K562 (cell line): ENCODE measurements at regions of chr11 and their contacts with region 1.

Region 1: GRCh38 chr11:9015677-9016076 is 11.9 kb upstream of the NRIP3 start:
- DNase-seq: peak; percentile 67 to 76 (median 70)
- ATAC-seq: peak; percentile 96
- H3K4me3 ChIP-seq: no peak overlapping the region
- H3K27ac ChIP-seq: no peak overlapping the region
- H3K4me1 ChIP-seq: no peaks in the 10 kb centered on the region; a peak in 2 of 5 replicates
- H3K27me3 ChIP-seq: peaks cover 0 to 27% of the 10 kb centered on the region in 2 experiments; a peak in 2 of 5 replicates
- CTCF ChIP-seq: peak; percentile 76 to 84 (median 80)
- EP300 ChIP-seq: no peak
- POLR2A ChIP-seq: no peak
- RAD21 ChIP-seq: peak; percentile 45 to 76

Region 2: GRCh38 chr11:8989453-8989852 is 26.2 kb before region 1 on chr11:
- CTCF ChIA-PET with region 1: no interaction called
- POLR2A ChIA-PET with region 1: no interaction called
- in situ Hi-C with region 1: no loop called
- intact Hi-C with region 1: no loop called
- DNase-seq: peak in 3 of 4 experiments; percentile 20 to 37 (median 30)
- ATAC-seq: peak; percentile 30; the same call in 1 of the 3 replicates
- H3K4me3 ChIP-seq: no peak overlapping the region
- H3K27ac ChIP-seq: peak overlapping the region; percentile 55; the same call in 2 of the 3 replicates
- H3K4me1 ChIP-seq: peaks cover 6 to 37% of the 10 kb centered on the region in 2 experiments
- H3K27me3 ChIP-seq: no peaks in the 10 kb centered on the region
- CTCF ChIP-seq: no peak
- EP300 ChIP-seq: no peak
- POLR2A ChIP-seq: no peak
- RAD21 ChIP-seq: no peak

Region 3: GRCh38 chr11:9003573-9004309 is 11.9 kb before region 1 on chr11 and contains the start of gene NRIP3:
- CTCF ChIA-PET with region 1: no interaction called
- POLR2A ChIA-PET with region 1: interaction called, 17 read pairs
- in situ Hi-C with region 1: no loop called
- intact Hi-C with region 1: no loop called
- DNase-seq: peak; percentile 83 to 91 (median 90)
- ATAC-seq: peak; percentile 92
- H3K4me3 ChIP-seq: peak within 1 kb of the TSS; percentile 48
- H3K27ac ChIP-seq: peak within 1 kb of the TSS; percentile 63
- H3K4me1 ChIP-seq: peaks cover 15 to 23% of the 10 kb centered on the region in 2 experiments
- H3K27me3 ChIP-seq: no peaks in the 10 kb centered on the region; a peak in 2 of 5 replicates
- CTCF ChIP-seq: 0 out of 6 replicates have a peak, but pooled peaks of 1 of the 3 experiments have one; percentile 9
- EP300 ChIP-seq: no peak
- POLR2A ChIP-seq: peak; percentile 80
- RAD21 ChIP-seq: 0 out of 4 replicates have a peak, but pooled peaks of 1 of the 2 experiments have one; percentile 3
- polyA plus RNA-seq, gene NRIP3: 4.4 to 6.4 TPM

Region 4: GRCh38 chr11:9060700-9061111 is 45.0 kb after region 1 on chr11:
- CTCF ChIA-PET with region 1: no interaction called
- POLR2A ChIA-PET with region 1: no interaction called
- in situ Hi-C with region 1: no loop called
- intact Hi-C with region 1: loop called (anchors 5 kb)
- DNase-seq: peak; percentile 38 to 59 (median 50)
- ATAC-seq: peak; percentile 85
- H3K4me3 ChIP-seq: no peak overlapping the region
- H3K27ac ChIP-seq: no peak overlapping the region
- H3K4me1 ChIP-seq: no peaks in the 10 kb centered on the region; a peak in 2 of 5 replicates
- H3K27me3 ChIP-seq: peaks cover 8 to 24% of the 10 kb centered on the region in 2 experiments
- CTCF ChIP-seq: peak; percentile 46 to 60 (median 56)
- EP300 ChIP-seq: no peak
- POLR2A ChIP-seq: no peak
- RAD21 ChIP-seq: peak in 1 of 2 experiments; percentile 44; a peak in 2 of 4 replicates

Region 5: DNA sequence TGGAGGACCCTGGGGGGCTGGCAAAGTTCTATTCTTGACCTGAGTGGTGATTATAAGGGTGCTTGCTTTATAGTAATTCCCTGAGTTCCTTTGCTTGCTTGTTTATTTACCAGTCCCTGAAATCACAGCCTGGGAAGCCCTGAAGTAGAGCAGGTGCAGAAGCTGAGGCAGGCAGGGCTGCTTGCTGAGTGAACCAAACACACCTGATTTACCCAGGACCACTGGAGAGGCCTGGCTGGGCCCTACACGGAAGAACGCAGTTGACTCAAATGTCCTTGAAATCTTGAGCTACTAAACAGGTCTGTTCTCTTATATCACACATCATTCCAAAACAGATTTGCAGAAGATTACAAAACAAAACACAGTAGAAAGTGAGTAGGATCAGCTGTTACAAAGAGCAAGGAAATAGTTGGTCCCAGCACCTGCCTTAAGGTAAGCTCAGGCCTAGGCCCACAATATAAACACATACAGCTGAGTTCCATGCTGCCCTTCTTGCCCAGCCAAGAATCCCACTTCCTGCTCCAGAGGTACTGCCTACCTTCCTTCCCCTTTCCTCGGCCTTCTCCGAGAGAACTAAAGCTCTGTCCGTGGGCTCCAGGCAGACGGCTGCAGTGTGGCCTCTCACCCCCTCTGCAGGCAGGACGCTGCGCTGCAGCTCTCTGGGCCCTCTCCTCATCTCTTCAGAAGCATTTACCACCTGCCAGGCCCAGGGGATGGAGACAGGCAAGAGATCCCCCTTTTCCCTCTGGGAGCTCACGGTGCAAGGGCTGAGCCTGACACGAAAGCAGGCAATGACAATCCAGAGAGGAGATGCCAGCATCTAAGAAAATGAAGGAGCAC is 121.8 kb after region 1 on chr11:
- CTCF ChIA-PET with region 1: interaction called, 10 read pairs
- POLR2A ChIA-PET with region 1: interaction called, 3 read pairs
- in situ Hi-C with region 1: loop called (anchors 10 kb)
- intact Hi-C with region 1: loop called (anchors 2 kb)
- DNase-seq: peak; percentile 74 to 79 (median 76)
- ATAC-seq: peak; percentile 99
- H3K4me3 ChIP-seq: no peak overlapping the region
- H3K27ac ChIP-seq: no peak overlapping the region
- H3K4me1 ChIP-seq: no peaks in the 10 kb centered on the region
- H3K27me3 ChIP-seq: no peaks in the 10 kb centered on the region
- CTCF ChIP-seq: peak; percentile 91 to 95 (median 94)
- EP300 ChIP-seq: peak; percentile 10; the same call in 1 of the 2 replicates
- POLR2A ChIP-seq: no peak
- RAD21 ChIP-seq: peak; percentile 84 to 92

Region 6: GRCh38 chr11:9951714-9952275 is 936.1 kb after region 1 on chr11:
- CTCF ChIA-PET with region 1: no interaction called
- POLR2A ChIA-PET with region 1: no interaction called
- in situ Hi-C with region 1: no loop called
- intact Hi-C with region 1: no loop called
- DNase-seq: no peak
- ATAC-seq: no peak
- H3K4me3 ChIP-seq: no peak overlapping the region
- H3K27ac ChIP-seq: no peak overlapping the region
- H3K4me1 ChIP-seq: no peaks in the 10 kb centered on the region
- H3K27me3 ChIP-seq: no peaks in the 10 kb centered on the region
- CTCF ChIP-seq: no peak
- EP300 ChIP-seq: no peak
- POLR2A ChIP-seq: no peak
- RAD21 ChIP-seq: no peak